Psoas muscle (tissue), 8 donors: ENCODE measurements at regions of chr1 and their contacts with region 1.

Region 1: GRCh38 chr1:207077470-207078377 is 10.9 kb upstream of the C4BPB start:
- DNase-seq: no peak
- ATAC-seq: peak; percentile 72 to 91 (median 84)
- H3K4me3 ChIP-seq: no peak overlapping the region
- H3K27ac ChIP-seq: peak overlapping the region; percentile 24
- H3K4me1 ChIP-seq: peaks cover 4% of the 10 kb centered on the region
- H3K27me3 ChIP-seq: no peaks in the 10 kb centered on the region
- CTCF ChIP-seq: peak; percentile 90

Region 2: GRCh38 chr1:206925106-206925736 is 152.5 kb before region 1 on chr1:
- intact Hi-C with region 1: loop called in 1 of 2 experiments (anchors 5 kb)
- DNase-seq: peak in 1 of 2 donors; percentile 24
- ATAC-seq: peak; percentile 42 to 54 (median 42)
- H3K4me3 ChIP-seq: no peak overlapping the region
- H3K27ac ChIP-seq: no peak overlapping the region
- H3K4me1 ChIP-seq: no peaks in the 10 kb centered on the region
- H3K27me3 ChIP-seq: no peaks in the 10 kb centered on the region
- CTCF ChIP-seq: no peak

Region 3: GRCh38 chr1:207049974-207050391 is 27.7 kb before region 1 on chr1:
- intact Hi-C with region 1: loop called (anchors 2 to 5 kb)
- DNase-seq: no peak
- ATAC-seq: peak in 3 of 4 donors; percentile 46 to 60 (median 50)
- H3K4me3 ChIP-seq: peak overlapping the region; percentile 94
- H3K27ac ChIP-seq: peak overlapping the region; percentile 84
- H3K4me1 ChIP-seq: peaks cover 39% of the 10 kb centered on the region
- H3K27me3 ChIP-seq: no peaks in the 10 kb centered on the region
- CTCF ChIP-seq: peak; percentile 80

Region 4: DNA sequence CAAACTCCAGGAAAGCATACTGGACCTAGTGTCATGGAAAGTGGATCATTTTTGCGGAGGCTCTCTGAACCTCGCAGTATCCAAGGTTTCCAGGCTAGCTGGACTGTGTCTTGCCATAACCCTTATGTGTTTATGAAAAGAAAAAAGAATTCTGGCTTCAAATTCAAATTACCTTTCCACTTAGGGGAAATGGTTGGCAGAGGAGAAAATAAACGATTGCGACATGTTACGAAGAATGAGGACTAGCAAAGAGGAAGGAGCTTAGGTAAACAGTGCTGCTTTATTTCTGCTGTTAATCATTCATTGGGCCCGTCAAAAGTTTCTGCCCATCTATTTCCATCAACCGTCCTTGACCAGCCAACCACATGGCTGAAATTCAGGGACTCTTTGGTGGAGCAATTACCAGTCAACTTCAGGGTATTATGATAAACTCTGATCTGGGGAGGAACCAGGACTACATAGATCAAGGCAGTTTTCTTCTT is 26.2 kb after region 1 on chr1 and contains the start of gene C4BPA:
- intact Hi-C with region 1: no loop called
- DNase-seq: no peak
- ATAC-seq: no peak
- H3K4me3 ChIP-seq: no peak within 1 kb of the TSS
- H3K27ac ChIP-seq: no peak within 1 kb of the TSS
- H3K4me1 ChIP-seq: no peaks in the 10 kb centered on the region
- H3K27me3 ChIP-seq: peaks cover 0 to 9% (median 0%) of the 10 kb centered on the region in 3 donors
- CTCF ChIP-seq: no peak
- total RNA-seq, gene C4BPA: 0.15 TPM in 1 of 4 donors, not detected in the others

Region 5: DNA sequence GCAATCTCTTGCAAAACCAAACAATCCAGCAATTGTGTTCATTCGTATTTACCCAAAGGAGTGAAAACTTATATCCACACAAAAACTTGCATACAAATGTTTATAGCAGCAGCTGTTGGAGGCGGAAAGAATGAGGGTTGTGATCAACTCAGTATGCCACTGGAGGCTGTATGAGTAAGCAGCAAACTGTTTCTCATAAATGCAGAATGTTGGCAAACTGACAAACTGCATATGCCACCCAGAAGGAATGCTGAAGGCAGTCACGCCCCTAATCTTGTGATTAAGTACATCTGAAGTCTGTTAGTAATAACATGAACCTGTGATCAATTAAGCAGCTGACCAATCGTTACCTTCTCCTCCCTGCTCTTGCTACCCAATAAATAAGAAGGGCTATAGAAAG is 315.9 kb after region 1 on chr1:
- intact Hi-C with region 1: no loop called
- DNase-seq: no peak
- ATAC-seq: no peak
- H3K4me3 ChIP-seq: no peak overlapping the region
- H3K27ac ChIP-seq: no peak overlapping the region
- H3K4me1 ChIP-seq: no peaks in the 10 kb centered on the region
- H3K27me3 ChIP-seq: no peaks in the 10 kb centered on the region
- CTCF ChIP-seq: no peak